Activated CD8-positive, alpha-beta T cell treated with anti-CD3 and anti-CD28 coated beads for 36 hours (primary cell): ENCODE measurements at regions of chr1 and their contacts with region 1.

Region 1: DNA sequence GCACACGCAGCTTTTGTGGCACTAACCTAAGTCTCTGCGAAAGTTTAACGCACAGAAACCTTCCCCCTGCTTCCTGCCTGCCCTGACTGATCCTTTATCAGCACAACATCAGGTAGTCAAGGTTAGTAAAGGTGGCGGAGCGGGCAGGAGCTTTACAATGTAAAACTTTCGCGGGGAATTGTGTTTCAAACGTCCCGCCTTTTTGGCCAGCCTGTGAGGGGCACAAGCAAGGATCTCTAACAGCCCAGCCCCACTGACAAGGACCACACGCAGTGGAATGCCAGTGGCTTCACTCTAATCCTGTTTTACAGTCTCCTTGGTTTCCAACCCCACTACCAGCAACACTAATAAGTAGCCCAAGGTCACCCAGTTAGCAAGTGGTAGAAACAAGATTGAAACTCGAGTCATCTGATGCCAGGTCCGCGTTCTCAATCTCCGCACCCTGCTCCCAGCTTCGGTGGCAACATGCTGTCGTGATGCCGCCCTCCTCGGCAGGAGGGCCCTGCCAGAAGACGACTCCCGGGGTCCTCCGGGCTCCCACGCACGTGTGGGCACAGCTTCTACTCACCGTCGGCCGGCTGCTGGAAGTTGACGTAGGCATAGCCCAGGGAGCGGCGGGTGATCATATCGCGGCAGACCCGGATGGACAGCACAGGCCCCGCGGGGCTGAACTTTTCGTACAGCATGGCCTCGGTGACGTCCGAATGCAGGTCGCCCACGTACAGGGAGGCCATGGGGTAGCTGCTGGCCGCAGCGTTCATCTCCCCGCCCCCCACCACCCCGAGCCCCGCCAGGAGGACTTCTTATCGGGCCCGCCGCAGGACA is 1.2 kb downstream of the PABPC4 start:
- DNase-seq: peak; percentile 74
- ATAC-seq: peak; percentile 42
- H3K4me3 Mint-ChIP-seq: peak overlapping the region; percentile 86
- H3K27ac Mint-ChIP-seq: peak overlapping the region; percentile 91
- H3K4me1 Mint-ChIP-seq: peaks cover 42% of the 10 kb centered on the region
- H3K27me3 Mint-ChIP-seq: no peaks in the 10 kb centered on the region
- CTCF ChIP-seq: no peak

Region 2: DNA sequence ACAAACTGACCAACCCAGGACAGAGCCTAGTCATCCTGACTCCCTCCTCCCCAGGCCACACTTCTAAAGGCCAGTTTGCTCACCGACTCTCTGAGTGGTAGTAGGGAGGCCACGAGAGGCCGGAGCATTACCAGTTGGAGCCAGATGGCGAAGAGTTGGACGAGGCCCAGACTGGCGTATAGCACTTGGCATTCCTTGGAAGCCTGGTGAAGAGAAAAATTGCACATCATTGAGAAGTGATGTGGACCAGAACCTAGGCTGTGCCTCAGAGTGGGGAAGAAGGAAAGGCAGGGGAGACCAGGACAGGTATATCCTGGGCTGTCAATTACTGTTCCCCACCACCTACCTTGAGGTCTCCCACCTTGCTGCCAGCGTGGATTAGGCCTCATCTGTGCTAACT is 11.1 kb before region 1 on chr1:
- CTCF ChIA-PET with region 1: interaction called, 5 read pairs
- POLR2A ChIA-PET with region 1: interaction called, 86 read pairs
- intact Hi-C with region 1: no loop called
- DNase-seq: no peak
- ATAC-seq: no peak
- H3K4me3 Mint-ChIP-seq: no peak overlapping the region
- H3K27ac Mint-ChIP-seq: no peak overlapping the region
- H3K4me1 Mint-ChIP-seq: peaks cover 10% of the 10 kb centered on the region
- H3K27me3 Mint-ChIP-seq: no peaks in the 10 kb centered on the region
- CTCF ChIP-seq: no peak

Region 3: GRCh38 chr1:39590551-39590950 is 15.1 kb after region 1 on chr1:
- CTCF ChIA-PET with region 1: interaction called, 4 read pairs
- POLR2A ChIA-PET with region 1: interaction called, 10 read pairs
- intact Hi-C with region 1: no loop called
- DNase-seq: no peak
- ATAC-seq: no peak
- H3K4me3 Mint-ChIP-seq: no peak overlapping the region
- H3K27ac Mint-ChIP-seq: no peak overlapping the region
- H3K4me1 Mint-ChIP-seq: no peaks in the 10 kb centered on the region
- H3K27me3 Mint-ChIP-seq: no peaks in the 10 kb centered on the region
- CTCF ChIP-seq: no peak